ENCODE measurements at regions of chr9 and their contacts with region 1.

Region 1: GRCh38 chr9:124771021-124771866 is at the start of gene NR6A1:
- DNase-seq: peak; percentile 95
- H3K4me3 ChIP-seq: peak within 1 kb of the TSS; percentile 80 to 96 (median 85)
- H3K27ac ChIP-seq: peak within 1 kb of the TSS; percentile 87
- H3K4me1 ChIP-seq: peaks cover 10% of the 10 kb centered on the region
- H3K27me3 ChIP-seq: no peaks in the 10 kb centered on the region
- CTCF ChIP-seq: peak in 1 of 2 donors; percentile 42
- total RNA-seq, gene NR6A1: 3.2 to 4.8 TPM

Region 2: GRCh38 chr9:124754289-124754688 is 17.0 kb before region 1 on chr9:
- CTCF ChIA-PET with region 1: no interaction called
- dilution Hi-C with region 1: no loop called
- in situ Hi-C with region 1: no loop called
- intact Hi-C with region 1: loop called (anchors 2 kb)
- DNase-seq: no peak
- H3K4me3 ChIP-seq: no peak overlapping the region
- H3K27ac ChIP-seq: no peak overlapping the region
- H3K4me1 ChIP-seq: peaks cover 14% of the 10 kb centered on the region
- H3K27me3 ChIP-seq: no peaks in the 10 kb centered on the region
- CTCF ChIP-seq: peak; percentile 36 to 65

Region 3: DNA sequence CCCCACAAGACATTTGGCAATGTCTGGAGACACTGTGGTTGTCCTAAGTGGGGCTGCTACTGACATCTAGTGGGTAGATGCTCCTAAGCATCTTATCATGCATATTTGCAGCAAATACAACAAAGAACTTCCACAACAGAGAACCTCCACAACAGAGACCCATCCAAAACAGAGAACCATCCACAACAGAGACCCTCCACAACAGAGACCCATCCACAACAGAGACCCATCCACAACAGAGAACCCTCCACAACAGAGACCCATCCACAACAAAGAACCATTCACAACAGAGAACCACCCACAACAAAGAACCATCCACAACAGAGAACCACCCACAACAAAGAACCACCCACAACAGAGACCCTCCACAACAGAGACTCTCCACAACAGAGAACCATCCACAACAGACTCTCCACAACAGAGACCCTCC is 123.5 kb after region 1 on chr9:
- CTCF ChIA-PET with region 1: no interaction called
- dilution Hi-C with region 1: no loop called
- in situ Hi-C with region 1: no loop called
- intact Hi-C with region 1: loop called (anchors 1 kb)
- DNase-seq: peak; percentile 24
- H3K4me3 ChIP-seq: no peak overlapping the region
- H3K27ac ChIP-seq: no peak overlapping the region
- H3K4me1 ChIP-seq: peaks cover 7% of the 10 kb centered on the region
- H3K27me3 ChIP-seq: no peaks in the 10 kb centered on the region
- CTCF ChIP-seq: peak; percentile 40 to 64

Region 4: GRCh38 chr9:125143375-125144090 is 372.3 kb after region 1 on chr9 and contains the start of gene SCAI:
- CTCF ChIA-PET with region 1: no interaction called
- dilution Hi-C with region 1: no loop called
- in situ Hi-C with region 1: loop called in 1 of 2 experiments (anchors 10 kb)
- intact Hi-C with region 1: loop called (anchors 1 kb)
- DNase-seq: peak; percentile 98
- H3K4me3 ChIP-seq: peak within 1 kb of the TSS; percentile 38 to 67 (median 59)
- H3K27ac ChIP-seq: no peak within 1 kb of the TSS
- H3K4me1 ChIP-seq: peaks cover 10% of the 10 kb centered on the region
- H3K27me3 ChIP-seq: no peaks in the 10 kb centered on the region
- CTCF ChIP-seq: peak; percentile 83 to 98
- total RNA-seq, gene SCAI: 3.1 to 7.7 TPM